ENCODE measurements at regions of chr7 and their contacts with region 1.

Region 1: GRCh38 chr7:150876817-150877526 is 24.7 kb downstream of the AOC1 start:
- DNase-seq: peak; percentile 72
- H3K4me3 ChIP-seq: no peak overlapping the region
- H3K27ac ChIP-seq: no peak overlapping the region
- H3K4me1 ChIP-seq: no peaks in the 10 kb centered on the region
- H3K27me3 ChIP-seq: no peaks in the 10 kb centered on the region

Region 2: DNA sequence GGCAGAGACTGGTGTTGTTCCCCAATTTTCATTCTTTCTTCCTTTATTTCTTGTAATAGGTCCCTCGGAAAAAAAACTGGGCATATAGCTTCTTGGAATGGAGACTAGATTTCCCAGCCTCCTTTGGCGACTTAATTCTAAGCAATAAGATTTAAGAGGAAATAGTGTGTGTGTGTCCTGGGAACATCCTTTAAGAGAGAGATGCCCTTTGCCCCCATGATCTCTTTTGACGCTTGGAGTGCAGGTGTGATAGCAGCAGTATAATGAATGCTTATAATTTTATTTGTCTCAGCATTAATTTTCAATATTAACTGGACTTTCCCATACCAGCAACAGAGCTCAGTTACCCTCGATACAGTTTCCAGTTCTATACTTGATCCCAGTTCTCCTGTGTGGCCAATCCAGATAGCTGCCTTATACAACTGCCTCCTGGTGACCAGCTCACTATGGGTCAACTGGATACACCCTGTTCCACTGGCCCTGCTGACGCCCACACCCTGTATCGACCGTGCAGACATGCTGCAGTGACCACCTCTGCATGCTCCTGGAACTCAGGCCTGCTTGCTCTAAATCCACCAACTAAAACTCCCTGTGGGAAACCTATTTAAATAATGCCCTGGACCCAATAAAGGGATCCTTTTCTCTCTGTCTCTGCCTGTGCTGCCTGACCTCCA is 62.5 kb before region 1 on chr7:
- in situ Hi-C with region 1: loop called (anchors 10 kb)
- DNase-seq: no peak
- H3K4me3 ChIP-seq: no peak overlapping the region
- H3K27ac ChIP-seq: no peak overlapping the region
- H3K4me1 ChIP-seq: no peaks in the 10 kb centered on the region
- H3K27me3 ChIP-seq: no peaks in the 10 kb centered on the region

Measured in GM23248 (cell line).